ENCODE measurements at regions of chr11 and their contacts with region 1.

Region 1: GRCh38 chr11:65403607-65404121 is 17.2 kb downstream of the FRMD8 start:
- DNase-seq: no peak
- H3K4me3 ChIP-seq: no peak overlapping the region
- H3K27ac ChIP-seq: peak overlapping the region in 15 of 59 donors; percentile 6 to 73 (median 31)
- H3K27me3 ChIP-seq: no peaks in the 10 kb centered on the region
- CTCF ChIP-seq: no peak

Region 2: GRCh38 chr11:65329944-65330403 is 73.7 kb before region 1 on chr11:
- intact Hi-C with region 1: no loop called
- DNase-seq: peak; percentile 42 to 97 (median 82)
- H3K4me3 ChIP-seq: peak overlapping the region in 30 of 59 donors; percentile 0 to 46 (median 20)
- H3K27ac ChIP-seq: peak overlapping the region in 41 of 59 donors; percentile 2 to 76 (median 50)
- H3K27me3 ChIP-seq: no peaks in the 10 kb centered on the region
- CTCF ChIP-seq: peak; percentile 70 to 97 (median 87)

Region 3: GRCh38 chr11:65389294-65389980 is 14.2 kb before region 1 on chr11:
- intact Hi-C with region 1: loop called in 1 of 2 experiments (anchors 2 kb)
- DNase-seq: peak in 1 of 10 donors; percentile 27
- H3K4me3 ChIP-seq: peak overlapping the region in 19 of 59 donors; percentile 2 to 97 (median 39)
- H3K27ac ChIP-seq: peak overlapping the region in 42 of 59 donors; percentile 23 to 90 (median 80)
- H3K27me3 ChIP-seq: no peaks in the 10 kb centered on the region
- CTCF ChIP-seq: no peak

Region 4: DNA sequence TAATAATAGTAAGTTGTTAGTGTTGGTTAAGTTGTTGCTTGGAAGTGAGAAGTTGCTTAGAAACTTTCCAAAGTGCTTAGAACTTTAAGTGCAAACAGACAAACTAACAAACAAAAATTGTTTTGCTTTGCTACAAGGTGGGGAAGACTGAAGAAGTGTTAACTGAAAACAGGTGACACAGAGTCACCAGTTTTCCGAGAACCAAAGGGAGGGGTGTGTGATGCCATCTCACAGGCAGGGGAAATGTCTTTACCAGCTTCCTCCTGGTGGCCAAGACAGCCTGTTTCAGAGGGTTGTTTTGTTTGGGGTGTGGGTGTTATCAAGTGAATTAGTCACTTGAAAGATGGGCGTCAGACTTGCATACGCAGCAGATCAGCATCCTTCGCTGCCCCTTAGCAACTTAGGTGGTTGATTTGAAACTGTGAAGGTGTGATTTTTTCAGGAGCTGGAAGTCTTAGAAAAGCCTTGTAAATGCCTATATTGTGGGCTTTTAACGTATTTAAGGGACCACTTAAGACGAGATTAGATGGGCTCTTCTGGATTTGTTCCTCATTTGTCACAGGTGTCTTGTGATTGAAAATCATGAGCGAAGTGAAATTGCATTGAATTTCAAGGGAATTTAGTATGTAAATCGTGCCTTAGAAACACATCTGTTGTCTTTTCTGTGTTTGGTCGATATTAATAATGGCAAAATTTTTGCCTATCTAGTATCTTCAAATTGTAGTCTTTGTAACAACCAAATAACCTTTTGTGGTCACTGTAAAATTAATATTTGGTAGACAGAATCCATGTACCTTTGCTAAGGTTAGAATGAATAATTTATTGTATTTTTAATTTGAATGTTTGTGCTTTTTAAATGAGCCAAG is 21.7 kb after region 1 on chr11:
- intact Hi-C with region 1: no loop called
- DNase-seq: peak in 8 of 10 donors; percentile 1 to 61 (median 37)
- H3K4me3 ChIP-seq: peak overlapping the region; percentile 51 to 90 (median 78)
- H3K27ac ChIP-seq: peak overlapping the region; percentile 94 to 100 (median 100)
- H3K27me3 ChIP-seq: no peaks in the 10 kb centered on the region
- CTCF ChIP-seq: peak in 9 of 56 donors; percentile 6 to 36 (median 24)